Posterior cingulate gyrus (tissue), 11 donors: ENCODE measurements at regions of chr5 and their contacts with region 1.

Region 1: DNA sequence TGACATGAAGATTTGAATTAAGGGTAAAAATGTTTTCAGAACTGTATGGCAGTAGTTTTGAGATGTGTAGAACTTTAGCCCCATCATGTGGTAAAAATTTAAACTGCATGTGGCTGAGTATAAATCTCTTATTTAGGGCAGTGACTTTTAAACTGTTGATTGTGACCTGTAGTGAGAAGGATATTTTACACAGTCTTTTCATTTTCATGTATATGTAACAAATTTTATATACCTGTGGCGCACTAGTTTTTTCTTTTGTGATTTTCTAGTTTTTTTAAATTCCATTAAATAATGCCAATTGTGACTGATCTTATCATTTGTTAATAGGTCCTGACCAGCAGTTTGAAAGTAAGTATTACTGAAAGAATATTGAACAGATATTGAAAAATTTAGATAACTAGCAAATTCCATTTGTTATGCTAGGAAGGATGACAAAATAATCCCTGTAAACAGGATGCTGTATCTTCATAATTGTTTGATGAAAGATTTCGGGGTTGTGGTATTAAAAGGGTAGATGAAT is 47.2 kb downstream of the GPBP1 start:
- DNase-seq: no peak

Region 2: GRCh38 chr5:56270568-56271392 is 950.3 kb before region 1 on chr5:
- intact Hi-C with region 1: loop called (anchors 1 kb)
- DNase-seq: peak; percentile 54 to 97 (median 80)

Region 3: GRCh38 chr5:56900858-56901578 is 320.1 kb before region 1 on chr5:
- intact Hi-C with region 1: loop called (anchors 1 kb)
- DNase-seq: peak in 1 of 10 donors; percentile 24

Region 4: GRCh38 chr5:56909294-56910209 is 311.6 kb before region 1 on chr5 and contains the start of gene SETD9:
- intact Hi-C with region 1: loop called (anchors 2 kb)
- DNase-seq: peak; percentile 91 to 99 (median 96)

Region 5: DNA sequence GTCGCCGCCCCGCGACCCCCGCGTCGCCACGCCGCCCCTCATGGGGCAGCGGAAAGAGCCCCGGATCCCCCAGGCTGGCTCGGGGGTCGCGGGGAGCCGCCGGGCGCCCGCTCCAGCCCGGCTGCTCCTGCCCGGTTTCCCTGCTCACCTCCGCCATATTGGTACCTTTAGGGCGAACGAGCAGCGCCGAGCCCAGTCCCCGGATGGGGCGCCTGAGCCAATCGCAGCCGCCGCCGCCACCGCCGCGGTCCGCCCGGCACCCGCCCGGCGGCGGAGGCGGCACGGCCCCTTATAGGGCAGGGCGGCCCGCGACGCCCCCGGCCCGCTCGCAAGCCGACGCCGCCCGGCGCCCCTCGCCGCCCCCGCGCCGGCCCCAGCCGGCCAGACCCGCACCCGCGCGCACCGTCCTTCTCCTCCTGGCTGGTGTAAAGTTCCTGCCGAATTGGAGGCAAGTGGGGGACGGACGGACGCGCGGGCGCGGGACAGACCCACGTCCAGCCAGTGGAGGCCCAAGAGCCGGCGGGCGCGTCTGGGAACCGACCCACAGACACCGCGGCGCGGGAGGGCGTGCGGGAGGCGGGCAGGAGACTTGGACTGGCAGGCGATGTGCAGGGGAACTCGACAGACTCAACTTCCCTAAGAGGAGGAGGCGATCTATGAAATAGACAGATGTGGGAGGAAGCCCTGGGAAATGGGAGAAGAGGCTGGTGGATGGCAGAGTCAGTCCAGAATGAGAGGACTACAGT is 269.0 kb before region 1 on chr5 and contains the start of gene MIER3:
- intact Hi-C with region 1: loop called (anchors 5 kb)
- DNase-seq: peak; percentile 66 to 96 (median 78)

Region 6: GRCh38 chr5:57173185-57174127 is 47.7 kb before region 1 on chr5 and contains the start of gene GPBP1:
- intact Hi-C with region 1: loop called (anchors 2 kb)
- DNase-seq: peak; percentile 95 to 100 (median 98)

Region 7: DNA sequence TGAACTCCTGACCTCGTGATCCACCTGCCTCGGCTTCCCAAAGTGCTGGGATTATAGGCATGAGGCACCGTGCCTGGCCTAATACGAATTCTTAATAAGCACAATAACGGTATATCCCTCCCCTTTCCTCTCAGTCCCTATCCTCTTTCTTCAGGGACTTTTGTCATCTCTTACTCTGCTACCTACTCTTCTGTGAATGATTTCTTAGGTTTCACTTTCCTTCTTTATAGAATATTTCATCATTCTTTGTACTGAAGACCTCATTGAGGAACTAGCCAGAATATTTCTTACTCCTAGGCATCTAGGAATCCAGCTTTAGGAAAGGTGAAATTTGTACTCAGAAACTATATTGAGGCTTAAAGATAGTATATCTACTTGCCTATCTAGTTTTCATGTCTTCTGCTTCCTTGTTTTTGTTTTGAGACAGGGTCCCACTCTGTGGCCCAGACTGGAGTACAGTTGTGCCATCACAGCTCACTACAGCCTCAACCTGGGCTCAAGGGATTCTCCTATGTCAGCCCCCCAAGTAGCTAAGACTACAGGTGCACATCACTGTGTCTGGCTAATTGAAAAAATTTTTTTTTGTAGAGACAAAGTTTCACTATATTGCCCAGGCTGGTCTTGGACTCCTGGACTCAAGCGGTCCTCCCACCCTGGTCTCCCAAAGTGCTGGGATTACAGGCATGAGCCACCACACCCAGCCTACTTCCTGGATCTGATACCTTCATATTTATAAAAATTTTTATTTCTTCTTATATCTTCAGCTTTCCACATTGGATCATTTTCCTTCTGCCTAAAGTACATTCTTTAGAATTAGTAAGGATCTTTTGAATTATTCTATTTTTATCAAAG is 22.4 kb after region 1 on chr5:
- intact Hi-C with region 1: no loop called
- DNase-seq: no peak

Region 8: GRCh38 chr5:57366744-57367143 is 145.6 kb after region 1 on chr5:
- intact Hi-C with region 1: no loop called
- DNase-seq: no peak

Region 9: DNA sequence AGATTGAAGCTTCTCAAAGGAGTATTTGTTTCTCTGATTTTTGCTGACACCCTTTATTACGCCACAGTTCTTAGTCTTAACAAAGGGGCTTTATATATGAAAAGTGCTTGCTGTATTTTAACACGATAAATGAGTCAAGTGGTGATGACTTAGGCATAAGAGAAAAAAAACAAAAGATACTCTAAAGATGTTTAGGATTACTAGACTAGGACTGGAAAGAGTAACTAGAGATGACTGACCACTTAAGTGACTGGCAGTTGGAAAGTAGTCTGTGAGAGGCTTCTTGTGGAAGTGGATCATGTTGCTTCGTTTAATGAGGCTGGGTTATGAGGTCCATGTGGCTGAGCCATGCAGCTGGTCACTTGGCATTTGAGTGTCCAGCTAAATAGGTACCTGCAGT is 330.9 kb after region 1 on chr5:
- intact Hi-C with region 1: no loop called
- DNase-seq: no peak

Region 10: GRCh38 chr5:58127479-58128220 is 906.5 kb after region 1 on chr5:
- intact Hi-C with region 1: no loop called
- DNase-seq: peak in 1 of 10 donors; percentile 55